Activated CD4-positive, alpha-beta T cell treated with anti-CD3 and anti-CD28 coated beads for 36 hours (primary cell): ENCODE measurements at regions of chr15 and their contacts with region 1.

Region 1: GRCh38 chr15:66700802-66701421 is 1.1 kb upstream of the SMAD6 start:
- DNase-seq: peak; percentile 93
- ATAC-seq: peak; percentile 86
- H3K4me3 Mint-ChIP-seq: peak overlapping the region; percentile 78
- H3K27ac Mint-ChIP-seq: peak overlapping the region; percentile 40
- H3K4me1 Mint-ChIP-seq: peaks cover 14% of the 10 kb centered on the region
- H3K27me3 Mint-ChIP-seq: peaks cover 16% of the 10 kb centered on the region

Region 2: GRCh38 chr15:66386204-66387123 is 314.4 kb before region 1 on chr15 and contains the start of gene MAP2K1:
- CTCF ChIA-PET with region 1: no interaction called
- POLR2A ChIA-PET with region 1: no interaction called
- intact Hi-C with region 1: loop called in 1 of 2 experiments (anchors 10 kb)
- DNase-seq: peak; percentile 99
- ATAC-seq: peak; percentile 84
- H3K4me3 Mint-ChIP-seq: peak within 1 kb of the TSS; percentile 95
- H3K27ac Mint-ChIP-seq: peak within 1 kb of the TSS; percentile 100
- H3K4me1 Mint-ChIP-seq: peaks cover 44% of the 10 kb centered on the region
- H3K27me3 Mint-ChIP-seq: no peaks in the 10 kb centered on the region
- total RNA-seq, gene MAP2K1: 94.9 to 115 TPM

Region 3: DNA sequence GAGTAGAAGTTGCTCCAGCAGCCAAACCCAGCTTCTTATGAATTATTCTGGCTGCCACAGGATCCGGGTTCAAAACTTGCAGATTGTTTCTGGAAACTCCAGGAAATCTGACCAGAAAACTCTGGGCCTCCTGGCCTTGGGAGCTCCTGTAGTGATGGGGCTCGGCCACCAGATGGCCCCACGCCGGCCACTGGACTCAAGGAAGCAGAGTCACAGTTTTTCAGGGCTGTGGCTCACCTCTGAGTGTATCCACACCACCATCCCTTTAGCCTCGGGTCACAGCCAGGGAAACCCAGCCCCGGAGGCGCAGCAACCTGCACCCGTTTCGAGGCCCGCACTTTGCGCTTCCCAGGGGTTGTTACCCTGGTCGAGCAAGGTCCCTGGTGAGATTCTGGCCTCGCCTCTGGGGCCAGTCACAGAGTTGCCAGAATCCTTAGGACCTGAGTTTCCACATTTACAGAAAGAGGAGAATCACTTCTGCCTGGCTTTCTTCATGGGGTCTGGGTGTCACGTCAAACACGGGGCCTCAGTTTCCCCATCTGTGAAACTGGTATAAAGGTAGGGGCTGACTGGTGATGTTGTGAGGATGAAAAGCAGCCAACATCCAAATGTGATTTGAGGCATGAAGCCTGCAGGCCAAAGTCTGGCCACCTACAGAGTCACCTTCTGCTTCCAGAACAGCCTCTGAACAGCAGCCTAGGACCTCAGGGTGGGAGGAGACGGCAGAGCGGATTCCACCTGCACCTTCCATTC is 81.6 kb before region 1 on chr15:
- CTCF ChIA-PET with region 1: no interaction called
- POLR2A ChIA-PET with region 1: no interaction called
- intact Hi-C with region 1: loop called in 1 of 2 experiments (anchors 10 kb)
- DNase-seq: peak; percentile 70
- ATAC-seq: peak; percentile 65
- H3K4me3 Mint-ChIP-seq: no peak overlapping the region
- H3K27ac Mint-ChIP-seq: no peak overlapping the region
- H3K4me1 Mint-ChIP-seq: no peaks in the 10 kb centered on the region
- H3K27me3 Mint-ChIP-seq: peaks cover 27% of the 10 kb centered on the region

Region 4: DNA sequence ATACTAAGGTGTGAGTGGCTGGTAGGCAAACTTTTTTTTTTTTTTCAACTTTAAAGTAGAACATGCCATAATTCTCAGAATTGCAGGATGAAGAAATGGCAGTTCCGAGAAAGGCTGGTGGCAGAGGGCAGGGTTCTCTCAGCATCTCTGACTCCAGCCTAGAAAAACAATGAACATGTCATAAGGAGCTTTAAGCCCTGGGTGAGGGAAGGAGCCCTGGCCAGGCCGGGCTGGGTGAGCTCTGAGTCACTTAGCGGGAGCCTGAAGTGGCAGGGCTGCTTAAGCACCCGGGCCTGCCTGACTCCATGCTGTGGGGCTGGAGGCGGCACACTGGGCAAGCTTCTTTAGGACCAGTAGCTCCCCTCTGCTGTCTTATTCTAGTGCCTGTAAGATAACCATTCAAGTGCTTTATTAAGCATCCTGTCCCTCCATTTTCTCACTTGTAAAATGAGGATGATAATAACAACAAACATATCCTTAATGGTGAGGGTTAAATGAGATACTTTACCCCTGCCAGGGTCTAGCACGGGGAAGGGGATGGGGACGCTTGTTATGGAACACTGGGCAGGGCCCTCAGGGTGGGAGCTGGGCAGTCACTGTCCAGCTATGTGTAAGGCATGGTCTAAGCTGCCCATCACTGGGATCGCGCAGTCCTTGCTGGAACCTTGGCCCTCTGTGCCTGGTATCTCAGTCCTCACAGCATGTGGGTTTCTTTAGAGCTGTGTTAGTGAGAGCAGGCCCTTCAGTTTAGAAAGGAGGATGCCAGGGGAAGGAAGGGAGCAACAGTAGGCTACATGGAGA is 19.5 kb after region 1 on chr15:
- CTCF ChIA-PET with region 1: no interaction called
- POLR2A ChIA-PET with region 1: no interaction called
- intact Hi-C with region 1: no loop called
- DNase-seq: peak; percentile 46
- ATAC-seq: peak; percentile 86
- H3K4me3 Mint-ChIP-seq: no peak overlapping the region
- H3K27ac Mint-ChIP-seq: no peak overlapping the region
- H3K4me1 Mint-ChIP-seq: no peaks in the 10 kb centered on the region
- H3K27me3 Mint-ChIP-seq: peaks cover 4% of the 10 kb centered on the region

Region 5: GRCh38 chr15:67254238-67255175 is 553.6 kb after region 1 on chr15 and contains the starts of genes AAGAB and IQCH:
- CTCF ChIA-PET with region 1: no interaction called
- POLR2A ChIA-PET with region 1: no interaction called
- intact Hi-C with region 1: loop called in 1 of 2 experiments (anchors 10 kb)
- DNase-seq: peak; percentile 98
- ATAC-seq: peak; percentile 93
- H3K4me3 Mint-ChIP-seq: peak within 1 kb of the TSS; percentile 100
- H3K27ac Mint-ChIP-seq: peak within 1 kb of the TSS; percentile 99
- H3K4me1 Mint-ChIP-seq: peaks cover 37% of the 10 kb centered on the region
- H3K27me3 Mint-ChIP-seq: no peaks in the 10 kb centered on the region
- total RNA-seq, gene AAGAB: 43.9 to 48.6 TPM
- total RNA-seq, gene IQCH: 1.8 to 2.1 TPM